Activated naive CD4-positive, alpha-beta T cell treated with anti-CD3 and anti-CD28 coated beads for 36 hours (primary cell): ENCODE measurements at regions of chr17 and their contacts with region 1.

Region 1: DNA sequence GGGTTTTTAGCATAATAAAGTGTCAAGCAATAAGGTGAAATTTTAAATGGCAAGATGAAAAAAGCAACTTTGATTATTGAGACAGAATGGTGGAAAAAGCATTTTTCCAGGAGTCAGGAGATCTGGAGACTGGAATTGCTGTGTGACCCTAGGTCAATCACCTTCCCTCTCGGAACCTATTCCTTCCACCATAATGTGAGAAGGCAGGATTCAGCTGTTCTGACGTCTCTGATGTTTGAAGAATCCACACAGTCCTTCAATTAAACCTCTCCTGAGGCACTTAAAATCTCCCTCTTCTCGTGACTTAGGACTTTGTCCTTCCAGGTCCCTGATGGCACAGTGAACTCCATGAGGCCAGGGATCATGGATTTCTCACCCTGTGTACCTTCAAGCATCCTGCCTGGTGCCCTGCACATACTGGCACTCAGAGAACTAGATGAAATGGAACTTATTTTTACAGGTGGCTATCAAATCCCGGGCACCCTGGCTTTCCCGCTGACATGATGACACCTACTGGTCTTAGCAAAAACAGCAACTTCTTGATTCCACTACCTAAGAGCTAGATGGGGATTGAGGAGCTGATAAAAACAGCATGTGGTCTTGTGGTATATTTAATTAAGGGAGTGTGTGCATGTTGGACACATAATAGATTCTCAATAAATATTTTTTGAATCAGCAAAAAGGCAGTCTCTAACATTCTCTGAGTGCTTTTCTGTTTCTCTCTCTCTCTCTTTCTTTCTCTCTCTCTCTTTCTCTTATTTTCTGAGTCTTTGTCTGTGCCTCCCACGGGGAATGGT is 2.3 kb upstream of the CCDC182 start:
- DNase-seq: peak; percentile 52
- H3K4me3 Mint-ChIP-seq: no peak overlapping the region
- H3K27ac Mint-ChIP-seq: no peak overlapping the region
- H3K4me1 Mint-ChIP-seq: no peaks in the 10 kb centered on the region
- H3K27me3 Mint-ChIP-seq: peaks cover 2% of the 10 kb centered on the region

Region 2: GRCh38 chr17:57130761-57131461 is 616.5 kb before region 1 on chr17:
- CTCF ChIA-PET with region 1: interaction called, 4 read pairs
- intact Hi-C with region 1: loop called (anchors 1 kb)
- DNase-seq: peak; percentile 91
- H3K4me3 Mint-ChIP-seq: no peak overlapping the region
- H3K27ac Mint-ChIP-seq: no peak overlapping the region
- H3K4me1 Mint-ChIP-seq: peaks cover 8% of the 10 kb centered on the region
- H3K27me3 Mint-ChIP-seq: no peaks in the 10 kb centered on the region

Region 3: GRCh38 chr17:57597531-57598453 is 149.6 kb before region 1 on chr17:
- CTCF ChIA-PET with region 1: interaction called, 3 read pairs
- intact Hi-C with region 1: loop called (anchors 2 kb)
- DNase-seq: peak; percentile 72
- H3K4me3 Mint-ChIP-seq: no peak overlapping the region
- H3K27ac Mint-ChIP-seq: peak overlapping the region; percentile 96
- H3K4me1 Mint-ChIP-seq: peaks cover 51% of the 10 kb centered on the region
- H3K27me3 Mint-ChIP-seq: no peaks in the 10 kb centered on the region

Region 4: DNA sequence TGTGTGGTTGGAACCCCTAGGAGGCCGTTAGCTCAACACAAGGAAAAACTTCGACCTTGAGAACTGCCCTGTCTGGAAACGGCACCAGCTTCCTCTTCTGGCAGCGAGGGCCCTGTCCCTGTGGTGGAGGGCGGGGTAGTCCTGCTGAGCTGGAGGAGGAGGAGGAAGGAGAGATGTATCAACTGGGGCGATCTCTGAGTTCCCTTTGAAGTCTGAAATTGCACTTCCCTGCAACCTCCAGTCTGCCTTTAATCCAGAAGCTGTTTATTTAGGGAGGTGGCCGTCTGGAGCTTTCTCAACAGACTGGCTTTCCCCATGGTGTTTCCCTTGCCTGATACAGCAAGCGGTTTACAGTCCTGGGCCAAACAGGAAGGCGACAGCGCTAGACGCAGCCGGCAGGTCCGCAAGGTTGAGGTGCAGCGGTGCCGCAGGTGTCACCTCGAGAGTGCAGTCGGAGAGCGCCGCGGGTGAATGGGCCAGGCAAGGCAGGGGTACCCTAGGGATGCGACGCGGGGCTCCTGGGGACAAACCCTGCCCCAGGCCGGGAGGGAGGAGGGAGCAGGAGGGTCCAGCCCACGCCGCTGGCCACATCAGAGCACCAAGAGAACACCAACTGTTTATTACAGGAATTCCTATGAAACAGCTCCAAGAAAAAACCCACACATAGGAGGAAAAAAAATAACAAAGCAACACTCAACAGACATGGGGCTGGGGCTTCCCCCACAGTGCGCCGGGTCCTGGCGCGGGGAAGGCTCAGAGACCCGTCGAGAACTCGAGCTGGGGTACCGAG is 113.8 kb after region 1 on chr17:
- CTCF ChIA-PET with region 1: no interaction called
- intact Hi-C with region 1: no loop called
- DNase-seq: peak; percentile 51
- H3K4me3 Mint-ChIP-seq: peak overlapping the region; percentile 65
- H3K27ac Mint-ChIP-seq: no peak overlapping the region
- H3K4me1 Mint-ChIP-seq: peaks cover 8% of the 10 kb centered on the region
- H3K27me3 Mint-ChIP-seq: peaks cover 7% of the 10 kb centered on the region

Region 5: DNA sequence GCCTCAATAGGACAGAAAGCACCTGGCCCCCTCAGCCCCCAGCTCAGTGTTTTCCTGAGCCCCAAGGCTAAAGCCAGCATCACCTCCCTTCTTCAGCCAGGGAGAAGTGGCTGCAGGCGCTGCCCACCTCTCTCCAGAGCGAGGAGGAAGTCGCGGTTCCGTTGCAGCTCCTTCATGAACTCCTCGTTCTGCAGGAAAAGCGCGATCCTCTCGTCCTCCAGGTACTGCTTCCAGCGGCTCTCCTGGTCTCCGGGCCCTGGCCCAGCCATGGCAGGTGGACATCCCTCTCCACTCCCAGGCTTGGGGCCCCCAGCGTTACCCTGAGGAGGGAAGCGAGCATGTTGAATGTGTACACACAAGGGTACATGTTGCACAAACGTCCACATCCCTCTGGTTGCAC is 125.1 kb after region 1 on chr17:
- CTCF ChIA-PET with region 1: no interaction called
- intact Hi-C with region 1: no loop called
- DNase-seq: no peak
- H3K4me3 Mint-ChIP-seq: no peak overlapping the region
- H3K27ac Mint-ChIP-seq: no peak overlapping the region
- H3K4me1 Mint-ChIP-seq: peaks cover 20% of the 10 kb centered on the region
- H3K27me3 Mint-ChIP-seq: peaks cover 3% of the 10 kb centered on the region